ENCODE measurements at regions of chr10 and their contacts with region 1.

Region 1: DNA sequence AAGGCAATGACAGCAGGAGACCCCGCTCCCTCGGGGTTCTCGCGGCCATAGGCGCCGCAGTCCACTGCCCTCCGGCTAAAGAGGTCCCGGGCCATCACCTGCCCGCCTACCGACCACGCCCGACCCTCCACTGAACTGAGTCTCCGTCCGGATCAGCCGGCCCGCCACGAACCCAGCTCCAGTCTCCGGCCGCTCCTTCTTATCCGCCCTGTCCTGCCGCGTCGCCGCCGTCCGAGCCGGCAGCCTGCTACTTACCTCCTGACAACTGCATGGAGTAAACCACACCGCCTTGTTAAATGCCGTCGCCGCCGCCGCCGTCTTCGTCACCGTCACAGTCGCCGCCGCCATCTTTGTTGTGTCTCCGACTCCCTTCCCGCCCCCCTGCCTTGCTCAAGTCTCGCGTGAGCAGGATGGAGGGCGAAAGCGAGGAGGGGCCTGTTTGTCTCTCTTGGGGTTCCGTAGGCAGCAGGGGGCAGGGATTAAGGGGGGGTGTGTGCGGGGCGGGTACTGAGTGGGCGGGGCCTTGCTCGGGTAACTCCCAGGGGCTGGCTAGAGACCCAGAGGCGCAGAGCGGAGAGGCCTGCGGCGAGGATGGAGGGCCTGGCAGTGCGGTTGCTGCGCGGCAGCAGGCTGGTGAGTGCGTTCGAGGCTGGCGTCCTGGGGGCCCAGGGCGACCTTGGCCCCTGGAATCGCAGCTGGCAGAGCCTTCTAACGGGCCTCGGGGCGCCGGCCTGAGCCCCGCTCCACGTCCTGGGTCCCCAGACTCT is at the starts of genes ACADSB and IKZF5:
- DNase-seq: peak; percentile 98
- H3K4me3 Mint-ChIP-seq: peak within 1 kb of the TSS; percentile 97
- H3K27ac Mint-ChIP-seq: peak within 1 kb of the TSS; percentile 100
- H3K4me1 Mint-ChIP-seq: peaks cover 18% of the 10 kb centered on the region
- H3K27me3 Mint-ChIP-seq: no peaks in the 10 kb centered on the region
- CTCF ChIP-seq: no peak
- total RNA-seq, gene ACADSB: 11.9 and 15.7 TPM in 2 replicates
- total RNA-seq, gene IKZF5: 10.3 and 16.4 TPM in 2 replicates

Region 2: GRCh38 chr10:122931088-122931958 is 77.3 kb before region 1 on chr10:
- CTCF ChIA-PET with region 1: no interaction called
- POLR2A ChIA-PET with region 1: no interaction called
- intact Hi-C with region 1: no loop called
- DNase-seq: no peak
- H3K4me3 Mint-ChIP-seq: no peak overlapping the region
- H3K27ac Mint-ChIP-seq: no peak overlapping the region
- H3K4me1 Mint-ChIP-seq: no peaks in the 10 kb centered on the region
- H3K27me3 Mint-ChIP-seq: no peaks in the 10 kb centered on the region
- CTCF ChIP-seq: no peak

Region 3: GRCh38 chr10:122953827-122954730 is 54.5 kb before region 1 on chr10 and contains the start of gene C10orf88:
- CTCF ChIA-PET with region 1: no interaction called
- POLR2A ChIA-PET with region 1: interaction called, 25 read pairs
- intact Hi-C with region 1: loop called (anchors 1 kb)
- DNase-seq: peak; percentile 98
- H3K4me3 Mint-ChIP-seq: peak within 1 kb of the TSS; percentile 87
- H3K27ac Mint-ChIP-seq: peak within 1 kb of the TSS; percentile 94
- H3K4me1 Mint-ChIP-seq: peaks cover 18% of the 10 kb centered on the region
- H3K27me3 Mint-ChIP-seq: no peaks in the 10 kb centered on the region
- CTCF ChIP-seq: no peak
- total RNA-seq, gene C10orf88: 11.7 and 13.6 TPM in 2 replicates

Region 4: DNA sequence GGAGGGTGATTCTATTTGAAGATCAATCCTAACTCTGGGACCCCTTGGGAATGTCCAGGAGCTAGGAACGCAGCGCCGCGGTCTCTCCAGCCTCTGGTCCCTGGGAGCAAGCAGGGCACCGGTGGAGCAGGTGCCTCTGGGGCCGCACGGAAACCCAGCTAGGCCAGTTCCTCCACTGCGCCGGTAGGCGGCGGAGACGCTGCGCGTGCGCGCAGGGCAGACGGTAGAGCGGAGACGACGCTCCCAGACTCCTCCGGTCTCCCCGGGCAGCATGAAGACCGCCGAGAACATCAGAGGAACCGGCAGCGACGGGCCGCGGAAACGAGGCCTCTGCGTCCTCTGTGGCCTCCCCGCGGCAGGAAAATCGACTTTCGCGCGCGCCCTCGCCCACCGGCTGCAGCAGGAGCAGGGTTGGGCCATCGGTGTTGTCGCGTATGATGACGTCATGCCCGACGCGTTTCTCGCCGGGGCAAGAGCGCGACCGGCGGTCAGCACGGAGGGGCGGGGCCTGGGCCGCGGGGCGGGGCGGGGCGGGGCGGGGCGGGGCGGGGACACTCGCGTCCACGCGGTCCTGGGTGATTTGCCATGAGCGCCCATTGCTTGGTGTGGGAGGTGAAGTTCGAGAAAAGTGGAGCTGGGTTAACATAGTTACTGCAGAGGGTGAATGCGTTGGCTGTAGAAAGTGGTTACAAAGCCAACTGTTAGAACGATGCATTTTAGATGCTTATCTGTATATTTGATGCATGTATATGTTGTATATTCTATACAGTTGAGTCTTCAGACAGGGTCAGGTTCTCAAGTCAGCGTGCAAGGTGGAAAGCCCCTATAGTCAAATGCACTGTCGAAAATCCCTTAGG is 28.2 kb before region 1 on chr10 and contains the start of gene PSTK:
- CTCF ChIA-PET with region 1: interaction called, 6 read pairs
- POLR2A ChIA-PET with region 1: interaction called, 75 read pairs
- intact Hi-C with region 1: no loop called
- DNase-seq: peak; percentile 88
- H3K4me3 Mint-ChIP-seq: peak within 1 kb of the TSS; percentile 86
- H3K27ac Mint-ChIP-seq: peak within 1 kb of the TSS; percentile 84
- H3K4me1 Mint-ChIP-seq: peaks cover 20% of the 10 kb centered on the region
- H3K27me3 Mint-ChIP-seq: no peaks in the 10 kb centered on the region
- CTCF ChIP-seq: peak; percentile 93
- total RNA-seq, gene PSTK: 6.5 and 8.3 TPM in 2 replicates

Region 5: GRCh38 chr10:122990278-122990677 is 18.3 kb before region 1 on chr10:
- CTCF ChIA-PET with region 1: no interaction called
- POLR2A ChIA-PET with region 1: interaction called, 75 read pairs
- intact Hi-C with region 1: no loop called
- DNase-seq: peak; percentile 23
- H3K4me3 Mint-ChIP-seq: no peak overlapping the region
- H3K27ac Mint-ChIP-seq: peak overlapping the region; percentile 14
- H3K4me1 Mint-ChIP-seq: no peaks in the 10 kb centered on the region
- H3K27me3 Mint-ChIP-seq: no peaks in the 10 kb centered on the region
- CTCF ChIP-seq: no peak

Region 6: GRCh38 chr10:123021517-123021916 is 12.9 kb after region 1 on chr10:
- CTCF ChIA-PET with region 1: interaction called, 4 read pairs
- POLR2A ChIA-PET with region 1: interaction called, 24 read pairs
- intact Hi-C with region 1: no loop called
- DNase-seq: peak; percentile 23
- H3K4me3 Mint-ChIP-seq: no peak overlapping the region
- H3K27ac Mint-ChIP-seq: no peak overlapping the region
- H3K4me1 Mint-ChIP-seq: peaks cover 7% of the 10 kb centered on the region
- H3K27me3 Mint-ChIP-seq: no peaks in the 10 kb centered on the region
- CTCF ChIP-seq: peak; percentile 28

Region 7: DNA sequence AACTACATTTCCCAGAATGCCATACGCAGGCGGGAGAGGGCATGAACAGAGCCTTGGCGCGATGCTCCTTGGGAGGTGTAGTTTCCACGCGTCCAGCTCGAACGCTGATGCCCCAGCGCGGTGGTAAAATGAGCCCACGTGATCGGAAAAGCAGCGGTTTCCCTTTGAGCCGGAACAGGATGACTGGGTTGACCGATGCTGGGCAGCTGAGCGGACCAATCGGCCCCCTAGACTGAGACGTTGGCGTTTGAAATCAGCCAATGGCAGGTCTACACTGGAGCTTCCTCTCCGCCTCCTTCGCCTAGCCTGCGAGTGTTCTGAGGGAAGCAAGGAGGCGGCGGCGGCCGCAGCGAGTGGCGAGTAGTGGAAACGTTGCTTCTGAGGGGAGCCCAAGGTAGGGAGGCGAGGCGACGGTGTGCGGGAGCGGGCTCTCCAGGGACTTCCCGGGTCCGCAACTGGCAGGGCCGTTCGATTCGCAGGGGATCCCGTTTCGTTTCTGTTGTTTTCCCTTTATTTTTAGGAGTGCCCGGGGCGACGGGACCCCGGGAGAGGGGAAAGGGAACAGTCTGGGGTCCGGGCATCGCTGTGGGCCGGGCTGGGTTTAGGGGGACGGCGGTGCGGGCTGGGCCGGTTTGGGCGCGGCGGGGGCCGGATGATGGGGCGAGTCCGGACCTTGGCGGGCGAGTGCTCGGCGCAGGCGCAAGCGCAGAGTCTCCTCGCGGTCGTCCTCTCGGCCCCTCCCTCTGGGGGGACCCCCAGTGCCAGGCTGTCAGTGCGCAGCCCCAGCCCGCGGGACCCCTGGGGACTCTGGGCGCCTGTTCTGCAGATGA is 145.7 kb after region 1 on chr10 and contains the start of gene BUB3:
- CTCF ChIA-PET with region 1: no interaction called
- POLR2A ChIA-PET with region 1: interaction called, 39 read pairs
- intact Hi-C with region 1: no loop called
- DNase-seq: peak; percentile 99
- H3K4me3 Mint-ChIP-seq: peak within 1 kb of the TSS; percentile 95
- H3K27ac Mint-ChIP-seq: peak within 1 kb of the TSS; percentile 92
- H3K4me1 Mint-ChIP-seq: peaks cover 32% of the 10 kb centered on the region
- H3K27me3 Mint-ChIP-seq: peaks cover 1% of the 10 kb centered on the region
- CTCF ChIP-seq: no peak
- total RNA-seq, gene BUB3: 185 and 197 TPM in 2 replicates